ENCODE measurements at regions of chr11 and their contacts with region 1.

Region 1: DNA sequence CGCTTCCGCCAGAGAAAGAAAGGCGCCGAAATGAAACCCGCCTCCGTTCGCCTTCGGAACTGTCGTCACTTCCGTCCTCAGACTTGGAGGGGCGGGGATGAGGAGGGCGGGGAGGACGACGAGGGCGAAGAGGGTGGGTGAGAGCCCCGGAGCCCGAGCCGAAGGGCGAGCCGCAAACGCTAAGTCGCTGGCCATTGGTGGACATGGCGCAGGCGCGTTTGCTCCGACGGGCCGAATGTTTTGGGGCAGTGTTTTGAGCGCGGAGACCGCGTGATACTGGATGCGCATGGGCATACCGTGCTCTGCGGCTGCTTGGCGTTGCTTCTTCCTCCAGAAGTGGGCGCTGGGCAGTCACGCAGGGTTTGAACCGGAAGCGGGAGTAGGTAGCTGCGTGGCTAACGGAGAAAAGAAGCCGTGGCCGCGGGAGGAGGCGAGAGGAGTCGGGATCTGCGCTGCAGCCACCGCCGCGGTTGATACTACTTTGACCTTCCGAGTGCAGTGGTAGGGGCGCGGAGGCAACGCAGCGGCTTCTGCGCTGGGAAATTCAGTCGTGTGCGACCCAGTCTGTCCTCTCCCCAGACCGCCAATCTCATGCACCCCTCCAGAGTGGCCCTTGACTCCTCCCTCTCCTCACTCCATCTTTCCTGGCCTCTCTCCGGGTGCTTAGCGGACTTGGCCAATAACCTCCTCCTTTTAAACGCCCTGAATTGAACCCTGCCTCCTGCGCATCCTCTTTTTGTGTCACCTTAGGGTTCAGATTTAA is at the start of gene ATM:
- DNase-seq: peak; percentile 97 to 99
- H3K4me3 ChIP-seq: peak within 1 kb of the TSS; percentile 80 to 85
- H3K27ac ChIP-seq: peak within 1 kb of the TSS; percentile 92 to 97
- H3K4me1 ChIP-seq: peaks cover 0 to 13% of the 10 kb centered on the region in 2 donors
- H3K27me3 ChIP-seq: no peaks in the 10 kb centered on the region
- CTCF ChIP-seq: peak; percentile 56 to 76 (median 74)
- total RNA-seq, gene ATM: 16.0 TPM

Region 2: DNA sequence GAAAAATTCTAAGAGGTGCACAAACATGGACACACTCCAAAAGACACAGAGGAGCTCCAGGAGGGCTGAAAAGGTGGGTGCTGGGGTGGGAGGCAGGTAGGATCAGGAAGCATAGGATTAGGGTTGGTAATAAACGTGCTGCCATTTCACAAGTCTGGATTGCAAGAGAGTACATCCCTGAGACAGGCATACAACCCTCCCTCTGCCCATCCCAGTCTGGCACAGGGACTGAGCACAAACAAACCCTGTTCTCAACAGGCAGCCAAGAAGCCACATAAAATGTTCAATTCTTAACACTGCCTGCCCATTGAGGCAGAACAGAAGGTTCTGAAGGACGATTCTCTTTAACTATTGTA is 382.8 kb before region 1 on chr11:
- intact Hi-C with region 1: loop called (anchors 10 kb)
- DNase-seq: no peak
- H3K4me3 ChIP-seq: peak overlapping the region in 1 of 2 donors; percentile 55
- H3K27ac ChIP-seq: peak overlapping the region; percentile 93
- H3K4me1 ChIP-seq: peaks cover 6 to 15% of the 10 kb centered on the region in 2 donors
- H3K27me3 ChIP-seq: no peaks in the 10 kb centered on the region
- CTCF ChIP-seq: no peak

Region 3: GRCh38 chr11:108121274-108122155 is 101.4 kb before region 1 on chr11 and contains the start of gene ACAT1:
- intact Hi-C with region 1: loop called (anchors 1 kb)
- DNase-seq: peak; percentile 96 to 99
- H3K4me3 ChIP-seq: peak within 1 kb of the TSS; percentile 84 to 92
- H3K27ac ChIP-seq: peak within 1 kb of the TSS; percentile 96 to 97
- H3K4me1 ChIP-seq: peaks cover 0 to 20% of the 10 kb centered on the region in 2 donors
- H3K27me3 ChIP-seq: no peaks in the 10 kb centered on the region
- CTCF ChIP-seq: peak in 2 of 3 experiments; percentile 9 to 39
- total RNA-seq, gene ACAT1: 187 TPM

Region 4: DNA sequence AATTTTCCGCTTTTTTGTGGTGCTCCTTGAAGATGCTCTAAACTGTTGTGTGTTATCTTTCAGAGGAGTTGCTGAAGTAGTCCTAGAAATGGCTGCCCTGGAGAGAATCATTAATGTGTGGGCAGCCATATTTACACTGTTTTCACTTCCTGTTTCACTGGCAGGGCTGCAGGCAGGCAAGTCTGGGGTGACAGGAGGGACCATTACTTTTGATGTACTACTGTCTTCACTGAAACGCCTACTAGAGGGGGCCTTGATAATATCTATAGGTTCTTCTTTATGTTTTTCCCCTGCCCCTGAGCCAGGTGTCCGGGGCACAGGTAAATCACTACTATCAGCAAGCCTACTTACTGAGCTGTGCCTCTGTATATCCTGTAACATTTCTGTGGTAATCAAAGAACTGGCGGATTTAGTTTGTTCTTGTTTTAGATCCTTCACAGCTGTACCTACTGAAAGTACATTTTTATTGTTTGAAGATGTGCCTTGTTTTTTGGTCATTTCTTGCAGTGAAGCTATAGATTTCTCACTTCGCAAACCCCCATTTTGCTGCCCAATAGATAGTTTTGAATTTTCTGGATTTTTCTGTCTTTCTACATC is 61.8 kb before region 1 on chr11:
- intact Hi-C with region 1: no loop called
- DNase-seq: no peak
- H3K4me3 ChIP-seq: no peak overlapping the region
- H3K27ac ChIP-seq: no peak overlapping the region
- H3K4me1 ChIP-seq: no peaks in the 10 kb centered on the region
- H3K27me3 ChIP-seq: no peaks in the 10 kb centered on the region
- CTCF ChIP-seq: no peak

Region 5: GRCh38 chr11:108199446-108200321 is 23.2 kb before region 1 on chr11:
- intact Hi-C with region 1: no loop called
- DNase-seq: no peak
- H3K4me3 ChIP-seq: no peak overlapping the region
- H3K27ac ChIP-seq: no peak overlapping the region
- H3K4me1 ChIP-seq: no peaks in the 10 kb centered on the region
- H3K27me3 ChIP-seq: no peaks in the 10 kb centered on the region
- CTCF ChIP-seq: no peak

Region 6: DNA sequence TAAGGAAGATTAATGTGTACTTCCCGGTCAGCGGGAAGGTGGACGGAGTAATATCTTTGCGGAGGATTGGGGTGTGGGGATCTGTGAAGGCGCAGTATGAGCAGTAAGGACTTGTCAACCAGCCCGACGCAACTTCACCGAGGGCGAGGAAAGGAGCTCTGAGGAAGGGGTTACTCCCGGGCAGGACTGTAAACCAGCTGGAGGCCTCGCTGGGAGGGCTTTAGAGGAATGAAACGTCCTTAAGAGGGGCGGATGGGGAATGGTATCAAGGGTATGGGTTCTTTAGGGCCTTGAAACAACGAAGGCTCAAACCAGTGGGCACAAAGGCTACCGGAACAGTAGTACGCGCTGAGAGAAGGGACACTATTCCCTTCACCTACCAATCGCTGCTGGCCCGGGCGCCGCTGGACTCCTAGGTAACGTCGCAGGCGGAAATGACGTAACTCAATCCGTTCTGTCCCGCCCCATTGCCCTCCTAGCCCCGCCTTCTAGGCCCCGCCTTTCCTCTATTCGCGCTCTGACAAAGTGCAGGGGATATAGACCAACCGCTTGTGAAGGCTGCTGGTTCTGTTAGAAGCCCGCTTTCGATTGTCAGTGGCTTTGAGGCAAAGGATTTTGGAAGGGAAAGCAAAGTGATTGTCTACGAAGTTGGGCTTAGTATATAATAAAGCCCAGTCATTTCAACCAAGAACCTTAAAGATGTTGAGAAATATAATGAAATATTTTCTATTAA is 244.4 kb after region 1 on chr11 and contains the start of gene C11orf65:
- intact Hi-C with region 1: loop called (anchors 1 kb)
- DNase-seq: peak; percentile 85 to 98
- H3K4me3 ChIP-seq: peak within 1 kb of the TSS; percentile 73 to 74
- H3K27ac ChIP-seq: peak within 1 kb of the TSS; percentile 97
- H3K4me1 ChIP-seq: peaks cover 0 to 7% of the 10 kb centered on the region in 2 donors
- H3K27me3 ChIP-seq: no peaks in the 10 kb centered on the region
- CTCF ChIP-seq: no peak
- total RNA-seq, gene C11orf65: not detected

Region 7: GRCh38 chr11:108664730-108665525 is 442.1 kb after region 1 on chr11 and contains the start of gene DDX10:
- intact Hi-C with region 1: loop called (anchors 2 kb)
- DNase-seq: peak; percentile 87 to 99
- H3K4me3 ChIP-seq: peak within 1 kb of the TSS; percentile 63 to 88
- H3K27ac ChIP-seq: peak within 1 kb of the TSS; percentile 37 to 65
- H3K4me1 ChIP-seq: peaks cover 8 to 21% of the 10 kb centered on the region in 2 donors
- H3K27me3 ChIP-seq: no peaks in the 10 kb centered on the region
- CTCF ChIP-seq: no peak
- total RNA-seq, gene DDX10: 21.9 TPM